ENCODE measurements at regions of chr6 and their contacts with region 1.

Region 1: GRCh38 chr6:15245361-15246216 is at the start of gene JARID2:
- DNase-seq: peak; percentile 99
- ATAC-seq: peak; percentile 89
- total RNA-seq, gene JARID2: 8.4 TPM

Region 2: GRCh38 chr6:14431385-14432330 is 813.9 kb before region 1 on chr6:
- intact Hi-C with region 1: loop called (anchors 10 kb)
- DNase-seq: no peak
- ATAC-seq: peak; percentile 91

Region 3: DNA sequence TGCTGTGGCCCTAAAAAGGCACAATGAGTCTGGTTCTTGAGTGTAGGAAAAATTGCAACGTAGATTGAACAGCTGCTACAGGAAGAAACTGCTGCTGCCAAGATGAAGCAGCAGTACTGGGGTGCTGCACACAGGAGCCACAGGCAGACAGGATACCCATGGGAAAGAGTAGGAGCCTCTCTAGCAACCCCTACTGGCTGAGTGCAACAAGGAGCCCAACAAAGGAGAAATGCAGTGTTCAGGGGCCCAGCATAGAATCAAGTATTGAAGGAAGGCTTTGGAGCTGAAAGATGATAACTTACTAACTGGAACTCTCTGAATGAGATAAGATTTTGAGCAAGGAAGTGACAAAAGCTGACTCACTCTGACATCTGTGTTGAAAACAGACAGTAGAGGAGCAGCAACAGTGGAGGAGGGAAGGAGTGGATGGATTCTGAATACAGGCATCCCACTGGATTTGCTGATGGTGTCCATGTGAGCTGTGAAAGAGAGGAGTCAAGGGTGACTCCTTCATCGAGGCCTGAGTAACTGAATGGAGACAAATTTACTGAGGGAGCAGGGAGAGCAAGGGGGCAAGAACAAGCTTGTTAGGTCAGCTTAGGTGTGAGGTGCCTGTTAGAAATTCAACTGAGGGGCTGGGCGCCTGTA is 534.4 kb before region 1 on chr6:
- intact Hi-C with region 1: loop called (anchors 10 kb)
- DNase-seq: no peak
- ATAC-seq: no peak

Region 4: DNA sequence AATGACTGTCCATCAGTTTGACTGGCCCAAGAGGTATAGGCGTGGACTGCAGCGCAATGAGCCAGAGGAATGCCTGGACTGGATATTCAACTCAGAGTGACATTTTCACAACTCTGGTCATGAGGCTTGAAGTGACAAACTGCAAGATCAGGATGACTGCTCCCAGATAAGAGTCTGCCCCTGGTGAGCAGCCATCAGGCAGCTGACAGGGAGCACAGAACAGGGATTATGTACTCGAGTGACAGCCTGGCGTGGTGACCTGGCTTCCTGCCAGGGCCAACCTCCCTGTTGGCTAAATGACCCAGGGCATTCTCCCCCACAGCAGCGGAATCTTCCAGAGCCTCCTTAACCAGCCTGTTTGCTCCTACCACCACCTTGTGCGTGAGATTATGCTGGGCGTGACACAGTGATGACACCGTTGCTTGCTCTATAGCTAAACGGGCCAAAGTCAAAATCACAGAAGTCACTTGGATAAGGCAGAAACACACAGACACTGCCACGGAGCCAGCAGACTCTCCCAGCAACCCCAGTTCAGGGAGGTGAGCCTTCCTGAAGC is 208.8 kb before region 1 on chr6:
- intact Hi-C with region 1: loop called (anchors 2 kb)
- DNase-seq: peak; percentile 83
- ATAC-seq: peak; percentile 96

Region 5: DNA sequence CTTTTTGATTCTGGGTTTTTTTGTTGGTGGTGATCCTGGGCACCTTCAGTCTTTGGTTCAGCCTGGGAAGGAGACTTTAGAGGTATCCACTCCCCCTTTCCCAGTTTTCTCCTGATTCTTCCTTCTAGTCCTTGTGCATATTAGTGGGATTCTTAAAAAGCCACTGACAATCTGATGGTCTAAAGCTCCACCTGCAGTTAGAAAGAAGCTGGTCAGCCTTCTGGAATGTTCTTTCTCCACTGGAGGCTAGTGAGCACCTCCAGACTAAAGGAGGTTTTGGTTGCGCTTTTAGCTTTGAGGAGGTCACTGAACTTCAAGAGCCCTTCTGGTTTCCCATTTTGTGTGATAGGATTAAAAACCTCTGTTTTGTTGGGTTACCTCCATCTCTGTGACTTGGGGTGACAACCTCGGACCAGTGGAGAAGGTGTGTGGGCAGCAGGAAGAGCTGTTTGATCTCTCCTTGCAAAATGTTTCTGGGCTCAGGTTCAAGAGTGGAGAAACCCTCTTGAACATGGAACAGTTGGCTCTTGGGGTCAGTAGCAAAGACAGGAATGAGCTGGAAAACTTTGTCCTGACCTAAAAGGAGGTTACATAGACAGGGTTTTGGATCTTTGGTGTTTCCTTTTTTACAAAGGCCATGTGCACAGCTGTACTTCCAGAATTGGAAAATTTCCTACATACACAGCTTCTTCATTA is 29.3 kb after region 1 on chr6:
- intact Hi-C with region 1: no loop called
- DNase-seq: no peak
- ATAC-seq: no peak

Region 6: GRCh38 chr6:15365273-15365687 is 119.7 kb after region 1 on chr6:
- intact Hi-C with region 1: loop called (anchors 10 kb)
- DNase-seq: peak; percentile 91
- ATAC-seq: peak; percentile 86

Region 7: GRCh38 chr6:15441215-15441868 is 195.8 kb after region 1 on chr6:
- intact Hi-C with region 1: loop called (anchors 2 kb)
- DNase-seq: no peak
- ATAC-seq: peak; percentile 84

Region 8: DNA sequence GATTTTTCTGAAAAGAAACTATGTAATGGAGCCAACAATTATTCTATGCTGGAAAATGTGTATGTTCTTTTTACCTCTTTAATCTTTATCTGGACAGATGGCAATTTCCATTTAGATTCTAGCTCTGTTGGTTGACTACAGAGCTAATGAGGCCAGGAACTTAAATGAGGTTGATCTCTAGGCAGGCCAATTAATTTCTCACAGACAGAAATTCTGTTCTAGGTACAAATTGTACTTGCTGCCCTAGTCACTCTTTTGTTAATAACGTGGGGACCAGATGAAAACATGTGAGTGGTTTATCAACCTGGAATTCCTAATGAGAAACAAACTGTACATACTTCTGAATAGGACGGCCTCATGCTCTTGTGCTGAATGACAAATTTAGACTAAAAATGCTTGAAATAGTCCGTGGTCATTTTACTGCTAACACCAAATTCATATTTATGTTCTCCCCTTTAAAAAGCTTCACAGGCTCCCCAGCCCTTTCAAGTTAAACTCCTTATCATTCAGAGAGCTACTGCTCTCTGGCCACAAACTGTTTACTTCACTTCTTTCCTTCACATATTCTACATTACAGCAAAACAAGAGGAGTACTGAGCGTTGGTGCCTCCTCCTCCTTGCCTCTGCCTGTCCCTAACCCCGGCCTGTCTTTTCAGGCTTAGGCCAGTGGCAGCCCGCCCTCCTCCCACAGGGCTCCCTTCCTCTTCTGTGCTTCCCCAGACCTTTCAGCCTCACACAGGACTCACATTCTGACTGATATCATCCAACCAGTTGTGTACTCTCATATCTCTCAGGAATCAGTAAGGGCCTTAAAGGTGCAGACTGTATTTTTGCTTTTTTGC is 375.8 kb after region 1 on chr6:
- intact Hi-C with region 1: loop called (anchors 5 kb)
- DNase-seq: peak; percentile 84
- ATAC-seq: peak; percentile 84

Measured in Right ventricle myocardium inferior (tissue), 1 donor.